GM23248 (cell line): ENCODE measurements at regions of chr3 and their contacts with region 1.

Region 1: GRCh38 chr3:71583566-71584449 is at the start of gene FOXP1:
- DNase-seq: peak; percentile 91
- H3K4me3 ChIP-seq: peak within 1 kb of the TSS; percentile 93
- H3K27ac ChIP-seq: peak within 1 kb of the TSS; percentile 81
- H3K4me1 ChIP-seq: peaks cover 45% of the 10 kb centered on the region
- H3K27me3 ChIP-seq: no peaks in the 10 kb centered on the region
- total RNA-seq, gene FOXP1: 37.4 and 52.5 TPM in 2 replicates

Region 2: GRCh38 chr3:70716832-70717231 is 867.0 kb before region 1 on chr3:
- in situ Hi-C with region 1: loop called (anchors 25 kb)
- DNase-seq: peak; percentile 67
- H3K4me3 ChIP-seq: no peak overlapping the region
- H3K27ac ChIP-seq: no peak overlapping the region
- H3K4me1 ChIP-seq: peaks cover 5% of the 10 kb centered on the region; the same call in 1 of the 2 replicates
- H3K27me3 ChIP-seq: no peaks in the 10 kb centered on the region

Region 3: DNA sequence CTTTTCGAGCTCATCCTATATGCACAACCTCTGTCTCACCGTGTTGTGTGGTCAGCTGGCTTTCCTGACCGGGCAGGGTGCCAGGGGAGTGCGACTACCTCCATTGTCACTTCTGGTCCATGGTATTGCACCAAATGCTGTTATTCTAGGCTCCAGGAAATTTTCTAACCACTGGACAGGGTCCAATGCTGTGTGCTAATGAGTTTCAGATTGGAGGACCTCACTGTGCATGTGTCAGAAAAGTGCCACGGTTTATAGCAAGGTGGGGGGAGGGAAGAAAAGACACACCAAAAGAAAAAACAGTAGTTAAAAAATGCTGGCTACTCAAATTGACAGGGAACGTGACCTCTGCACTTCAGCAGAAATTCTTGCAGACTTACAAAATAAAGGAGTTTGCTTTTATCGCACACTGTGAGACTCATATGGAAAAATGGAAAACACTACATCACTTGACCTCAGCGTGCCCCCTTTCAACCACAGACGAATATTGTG is 480.3 kb before region 1 on chr3:
- in situ Hi-C with region 1: loop called (anchors 25 kb)
- DNase-seq: peak; percentile 79
- H3K4me3 ChIP-seq: peak overlapping the region; percentile 3; the same call in 1 of the 2 replicates
- H3K27ac ChIP-seq: peak overlapping the region; percentile 96
- H3K4me1 ChIP-seq: peaks cover 60% of the 10 kb centered on the region
- H3K27me3 ChIP-seq: no peaks in the 10 kb centered on the region

Region 4: GRCh38 chr3:71332813-71333212 is 251.0 kb before region 1 on chr3:
- in situ Hi-C with region 1: no loop called
- DNase-seq: no peak
- H3K4me3 ChIP-seq: no peak overlapping the region
- H3K27ac ChIP-seq: no peak overlapping the region
- H3K4me1 ChIP-seq: no peaks in the 10 kb centered on the region
- H3K27me3 ChIP-seq: no peaks in the 10 kb centered on the region

Region 5: DNA sequence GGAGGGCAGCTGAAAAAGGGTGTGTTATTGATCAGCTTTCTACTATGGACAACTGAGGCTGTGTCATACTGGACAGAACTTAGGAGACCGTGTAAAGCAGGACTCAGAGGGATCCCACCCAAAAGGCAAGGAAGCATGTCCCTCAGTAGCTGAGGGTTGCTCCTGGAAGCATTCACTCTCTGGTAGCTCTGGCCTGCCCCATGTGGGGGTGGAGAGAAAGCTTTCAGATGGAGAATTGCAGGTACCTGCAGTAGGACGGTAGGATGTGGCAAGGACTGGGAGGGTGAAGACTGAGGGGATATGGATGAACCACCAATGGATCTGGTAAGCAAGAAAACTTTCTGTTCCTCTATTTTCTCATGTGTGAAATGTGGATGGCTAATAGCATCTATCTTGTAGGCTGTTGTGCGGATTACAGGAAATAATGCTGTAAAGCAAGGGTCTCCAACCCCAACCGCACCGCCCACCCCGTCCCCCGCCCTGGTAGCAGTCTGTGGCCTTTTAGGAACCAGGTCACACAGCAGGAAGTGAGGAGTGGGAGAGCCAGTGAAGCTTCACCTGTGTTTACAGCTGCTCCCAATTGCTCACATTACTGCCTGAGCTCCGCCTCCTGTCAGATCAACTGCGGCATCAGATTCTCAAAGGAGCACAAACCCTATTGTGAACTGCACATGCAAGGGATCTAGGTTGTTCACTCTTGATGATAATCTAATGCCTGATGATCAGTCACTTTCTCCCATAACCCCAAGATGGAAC is 358.8 kb after region 1 on chr3:
- in situ Hi-C with region 1: no loop called
- DNase-seq: no peak
- H3K4me3 ChIP-seq: no peak overlapping the region
- H3K27ac ChIP-seq: no peak overlapping the region
- H3K4me1 ChIP-seq: no peaks in the 10 kb centered on the region
- H3K27me3 ChIP-seq: peaks cover 22% of the 10 kb centered on the region